Heart left ventricle (tissue), 16 donors: ENCODE measurements at regions of chr12 and their contacts with region 1.

Region 1: DNA sequence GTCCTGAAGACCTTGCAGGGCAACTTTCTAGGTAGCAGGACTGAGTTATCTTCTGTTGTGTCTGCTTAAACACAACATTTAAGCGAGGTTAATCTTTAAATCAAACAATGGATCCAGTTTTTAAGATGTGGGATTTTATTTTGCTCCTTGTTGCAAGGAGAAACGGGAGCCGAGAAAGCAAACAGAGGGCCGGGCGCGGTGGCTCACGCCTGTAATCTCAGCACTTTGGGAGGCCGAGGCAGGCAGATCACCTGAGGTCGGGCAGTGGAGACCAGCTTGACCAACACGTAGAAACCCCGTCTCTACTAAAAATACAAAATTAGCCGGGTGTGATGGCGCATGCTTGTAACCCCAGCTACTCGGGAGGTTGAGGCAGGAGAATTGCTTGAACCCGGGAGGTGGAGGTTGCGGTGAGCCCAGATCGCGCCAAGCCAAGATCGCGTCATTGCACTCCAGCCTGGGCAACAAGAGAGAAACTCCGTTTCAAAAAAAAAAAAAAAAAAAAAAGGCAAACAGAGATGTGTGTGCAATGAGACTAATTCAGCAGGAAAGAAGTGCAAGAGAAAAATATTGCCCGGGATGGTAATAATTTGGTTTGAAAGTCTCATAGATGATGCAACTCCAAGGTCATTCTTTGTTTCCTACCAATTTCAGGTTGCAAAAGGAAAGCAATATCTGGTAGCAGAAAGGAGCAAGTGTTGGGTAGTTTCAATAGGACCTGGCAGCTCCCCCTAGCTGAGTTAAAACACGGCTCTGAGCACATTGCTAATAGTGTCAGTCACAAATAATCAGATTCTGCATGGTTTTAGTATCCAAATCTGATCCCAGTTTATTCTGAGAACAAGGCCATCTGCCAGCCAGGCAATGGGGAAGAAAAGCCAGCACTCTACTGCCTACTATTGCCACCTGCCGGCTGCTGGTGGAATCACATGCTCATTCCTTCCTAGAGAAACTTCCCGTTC is 141.4 kb downstream of the PPM1H start:
- DNase-seq: peak; percentile 77 to 88 (median 82)
- ATAC-seq: peak; percentile 47 to 83 (median 74)
- H3K4me3 ChIP-seq: no peak overlapping the region
- H3K27ac ChIP-seq: peak overlapping the region in 6 of 12 donors; percentile 1 to 60 (median 20)
- H3K4me1 ChIP-seq: peaks cover 0 to 41% (median 13%) of the 10 kb centered on the region in 12 donors
- H3K27me3 ChIP-seq: no peaks in the 10 kb centered on the region
- CTCF ChIP-seq: peak; percentile 91 to 99 (median 96)
- POLR2A ChIP-seq: no peak

Region 2: DNA sequence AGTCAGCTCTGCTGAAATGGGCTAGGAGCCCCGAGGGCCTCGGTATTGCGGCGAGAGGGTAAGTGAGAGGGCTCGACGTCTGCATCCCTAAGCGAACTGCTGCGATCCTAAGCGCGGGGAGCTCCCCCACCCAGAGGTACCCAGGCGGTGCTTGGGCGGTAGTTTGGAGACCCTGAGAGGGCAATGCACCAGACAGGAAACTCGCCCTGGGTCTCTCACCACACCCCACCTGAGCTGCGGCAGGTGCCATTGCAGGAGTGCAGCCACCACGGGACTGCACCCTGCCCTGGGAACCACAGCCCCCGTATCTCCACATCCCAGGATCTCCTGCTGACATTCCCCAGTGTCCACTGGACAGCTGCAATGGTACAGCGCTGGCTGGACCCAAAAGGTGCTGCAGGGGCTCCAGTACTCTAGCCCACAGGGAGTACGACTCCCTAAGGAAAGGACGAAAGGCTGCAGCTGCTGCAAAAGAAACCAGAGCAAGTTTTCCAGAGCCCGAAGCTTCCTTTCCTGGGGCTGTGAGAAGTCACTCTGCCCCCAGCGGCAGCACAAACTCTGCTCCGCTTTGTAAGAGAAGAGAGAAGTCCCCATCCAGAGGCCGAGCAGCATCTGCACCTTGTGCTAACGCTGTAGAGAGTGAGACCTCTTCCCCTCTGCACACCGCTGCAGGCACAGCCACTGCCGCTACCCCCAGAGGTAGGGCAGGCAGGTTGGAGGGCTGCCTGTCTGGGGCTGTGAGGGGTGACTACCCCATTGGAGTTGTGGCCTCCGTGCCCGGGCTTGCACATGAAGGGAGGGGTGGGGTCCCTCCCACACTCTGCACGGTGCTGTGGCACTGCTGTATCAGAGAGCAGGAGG is 358.0 kb before region 1 on chr12:
- intact Hi-C with region 1: loop called in 8 of 10 experiments (anchors 2 to 5 kb)
- DNase-seq: peak; percentile 38 to 71 (median 47)
- ATAC-seq: peak; percentile 33 to 89 (median 84)
- H3K4me3 ChIP-seq: peak overlapping the region in 11 of 12 donors; percentile 30 to 63 (median 51)
- H3K27ac ChIP-seq: no peak overlapping the region
- H3K4me1 ChIP-seq: peaks cover 0 to 18% (median 9%) of the 10 kb centered on the region in 12 donors
- H3K27me3 ChIP-seq: peaks cover 0 to 38% (median 16%) of the 10 kb centered on the region in 9 donors
- CTCF ChIP-seq: peak in 11 of 12 donors; percentile 25 to 64 (median 40)
- POLR2A ChIP-seq: no peak

Region 3: DNA sequence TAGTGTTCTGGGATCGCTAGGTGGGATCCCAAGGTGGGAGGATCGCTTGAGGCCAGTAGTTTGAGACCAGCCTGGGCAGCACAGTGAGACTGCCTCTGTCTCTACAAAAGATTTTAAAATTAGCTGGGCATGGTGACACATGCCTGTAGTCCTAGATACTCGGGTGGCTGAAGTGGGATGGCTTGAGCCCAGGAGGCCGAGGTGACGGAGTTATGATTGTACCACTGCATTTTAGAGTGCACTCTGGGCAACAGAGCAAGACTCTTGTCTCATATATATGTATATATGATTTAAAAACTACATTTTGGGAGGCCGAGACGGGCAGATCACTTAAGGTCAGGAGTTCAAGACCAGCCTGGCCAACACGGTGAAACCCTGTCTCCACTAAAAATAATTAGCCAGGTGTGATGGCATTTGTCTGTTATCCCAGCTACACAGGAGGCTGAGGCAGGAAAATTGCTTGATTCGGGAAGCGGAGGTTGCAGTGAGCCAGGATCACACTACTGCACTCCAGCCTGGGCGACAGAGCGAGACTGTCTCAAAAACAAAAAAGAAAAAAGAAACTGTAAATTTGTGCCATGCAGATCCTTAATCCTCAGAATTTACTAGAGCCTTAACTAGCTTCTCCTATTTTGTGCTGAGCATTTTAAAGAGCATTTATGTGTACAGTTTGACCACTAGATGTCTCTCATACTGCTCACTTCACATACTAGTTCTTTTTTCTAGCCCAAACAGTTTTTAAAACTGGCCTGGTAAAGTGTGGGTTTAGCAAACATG is 212.1 kb before region 1 on chr12:
- intact Hi-C with region 1: loop called in 9 of 10 experiments (anchors 1 to 5 kb)
- DNase-seq: peak in 4 of 5 donors; percentile 10 to 56 (median 46)
- ATAC-seq: peak; percentile 81 to 94 (median 87)
- H3K4me3 ChIP-seq: no peak overlapping the region
- H3K27ac ChIP-seq: peak overlapping the region in 5 of 12 donors; percentile 4 to 55 (median 25)
- H3K4me1 ChIP-seq: peaks cover 0 to 7% (median 0%) of the 10 kb centered on the region in 12 donors
- H3K27me3 ChIP-seq: no peaks in the 10 kb centered on the region
- CTCF ChIP-seq: peak; percentile 58 to 78 (median 69)
- POLR2A ChIP-seq: no peak

Region 4: DNA sequence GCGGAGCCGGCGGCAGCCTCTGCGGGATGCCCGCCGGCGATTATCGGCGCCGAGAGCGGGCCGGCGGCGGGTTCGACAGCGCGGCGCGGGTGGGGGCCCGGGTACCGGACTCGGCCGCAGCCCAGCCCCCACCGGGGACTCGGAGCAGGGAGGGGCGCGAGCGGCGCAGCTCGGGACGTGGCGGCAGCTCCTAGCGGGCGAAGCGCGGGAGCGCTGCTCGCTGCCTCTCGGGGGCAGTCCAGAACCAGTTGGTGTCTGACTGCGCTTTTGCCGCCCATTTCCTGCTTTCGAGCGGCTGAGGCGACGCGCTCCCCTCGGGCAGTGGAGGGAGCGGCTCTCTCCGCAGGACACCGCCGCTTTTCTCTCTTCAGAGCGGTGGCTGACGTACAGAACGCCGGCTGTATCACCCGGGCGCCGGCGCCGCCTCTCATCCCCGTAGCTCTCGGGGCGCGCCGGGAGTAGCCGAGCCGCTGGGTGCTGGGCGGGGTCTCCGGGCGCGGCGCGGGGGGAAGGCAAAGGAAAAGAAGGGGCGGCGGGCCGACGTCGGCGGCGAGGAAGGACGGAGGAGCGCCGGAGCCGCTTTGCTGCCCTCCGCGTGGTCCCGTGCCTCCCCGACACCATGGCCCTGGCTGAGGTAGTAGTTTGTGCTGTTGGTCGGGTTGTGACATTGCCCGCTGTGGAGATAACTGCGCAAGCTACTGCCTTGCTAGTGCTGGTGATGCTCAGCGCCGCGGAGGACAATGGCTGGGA is 190.3 kb before region 1 on chr12:
- intact Hi-C with region 1: loop called (anchors 1 to 5 kb)
- DNase-seq: peak; percentile 89 to 94 (median 90)
- ATAC-seq: peak; percentile 84 to 95 (median 92)
- H3K4me3 ChIP-seq: peak overlapping the region; percentile 69 to 100 (median 88)
- H3K27ac ChIP-seq: peak overlapping the region; percentile 98 to 100 (median 100)
- H3K4me1 ChIP-seq: peaks cover 2 to 42% (median 20%) of the 10 kb centered on the region in 12 donors
- H3K27me3 ChIP-seq: no peaks in the 10 kb centered on the region
- CTCF ChIP-seq: peak; percentile 27 to 78 (median 54)
- POLR2A ChIP-seq: peak in 1 of 2 donors; percentile 50

Region 5: GRCh38 chr12:62631471-62632410 is 161.8 kb before region 1 on chr12:
- intact Hi-C with region 1: loop called in 3 of 10 experiments (anchors 1 to 10 kb)
- DNase-seq: peak; percentile 67 to 81 (median 76)
- ATAC-seq: peak; percentile 75 to 93 (median 88)
- H3K4me3 ChIP-seq: peak overlapping the region; percentile 48 to 73 (median 62)
- H3K27ac ChIP-seq: peak overlapping the region in 11 of 12 donors; percentile 47 to 80 (median 72)
- H3K4me1 ChIP-seq: peaks cover 0 to 23% (median 7%) of the 10 kb centered on the region in 12 donors
- H3K27me3 ChIP-seq: peaks cover 0 to 22% (median 0%) of the 10 kb centered on the region in 9 donors
- CTCF ChIP-seq: peak in 9 of 12 donors; percentile 20 to 60 (median 42)
- POLR2A ChIP-seq: peak in 1 of 2 donors; percentile 40

Region 6: GRCh38 chr12:62703011-62703380 is 90.5 kb before region 1 on chr12:
- intact Hi-C with region 1: loop called in 2 of 10 experiments (anchors 5 kb)
- DNase-seq: no peak
- ATAC-seq: peak in 2 of 4 donors; percentile 13 to 55
- H3K4me3 ChIP-seq: no peak overlapping the region
- H3K27ac ChIP-seq: peak overlapping the region in 11 of 12 donors; percentile 39 to 87 (median 66)
- H3K4me1 ChIP-seq: peaks cover 5 to 48% (median 27%) of the 10 kb centered on the region in 12 donors
- H3K27me3 ChIP-seq: no peaks in the 10 kb centered on the region
- CTCF ChIP-seq: no peak
- POLR2A ChIP-seq: no peak

Region 7: DNA sequence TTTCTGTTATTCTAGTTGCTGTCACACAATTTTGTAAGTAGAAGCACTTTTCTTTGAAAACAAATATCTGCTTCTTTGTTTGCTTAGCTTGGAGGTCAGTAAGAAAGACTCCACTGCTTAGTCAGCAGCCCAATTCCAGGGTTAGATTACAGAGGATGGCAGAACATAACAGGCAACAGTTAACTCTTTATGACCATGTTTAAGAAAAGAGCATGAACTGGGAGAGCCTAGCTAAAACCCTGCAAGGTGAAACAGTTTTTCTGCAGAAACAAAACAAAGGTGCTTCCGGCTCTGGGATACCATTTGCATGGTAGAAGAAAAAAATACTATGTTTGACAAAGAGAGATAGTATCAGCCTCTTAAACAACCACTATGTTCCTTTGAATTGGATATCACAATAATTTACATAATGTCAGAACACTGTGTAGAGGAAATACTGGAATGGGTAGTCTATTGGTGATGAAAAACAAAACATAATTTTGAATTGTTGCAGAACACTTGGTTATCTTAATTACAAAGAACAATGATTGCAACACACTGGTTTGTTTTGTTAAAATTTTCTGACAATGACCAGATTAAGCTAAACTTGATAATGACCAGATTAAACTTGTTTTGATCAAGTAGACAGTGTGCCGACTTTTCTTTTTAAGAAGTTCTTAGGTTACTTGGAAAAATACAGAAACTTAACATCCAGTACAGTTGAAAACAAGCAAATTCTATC is 163.9 kb after region 1 on chr12:
- intact Hi-C with region 1: no loop called
- DNase-seq: no peak
- ATAC-seq: no peak
- H3K4me3 ChIP-seq: no peak overlapping the region
- H3K27ac ChIP-seq: no peak overlapping the region
- H3K4me1 ChIP-seq: no peaks in the 10 kb centered on the region
- H3K27me3 ChIP-seq: no peaks in the 10 kb centered on the region
- CTCF ChIP-seq: no peak
- POLR2A ChIP-seq: no peak